Posterior cingulate gyrus (tissue), 11 donors: ENCODE measurements at regions of chr9 and their contacts with region 1.

Region 1: DNA sequence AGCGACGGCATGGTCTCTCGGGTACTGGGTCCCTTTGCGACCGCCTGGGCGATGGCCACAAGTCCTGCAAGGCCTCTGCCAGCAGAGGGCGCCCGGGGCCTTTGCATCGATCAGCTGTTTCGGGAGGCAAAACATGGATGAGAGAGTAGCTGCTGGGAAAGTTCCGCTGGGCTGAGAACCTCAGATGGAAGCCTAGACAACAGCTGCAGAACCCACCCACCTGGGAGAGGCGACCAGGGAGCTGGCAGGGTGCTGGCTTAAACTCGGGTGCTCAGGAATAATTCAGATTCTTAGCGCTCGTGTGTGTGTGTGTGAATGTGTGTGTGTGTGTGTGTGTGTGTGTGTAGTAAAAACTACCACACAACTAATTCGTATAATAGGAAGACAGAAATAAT is 50.0 kb downstream of the TRIM32 start:
- DNase-seq: peak; percentile 74 to 98 (median 89)

Region 2: GRCh38 chr9:116860509-116861120 is 123.5 kb after region 1 on chr9:
- intact Hi-C with region 1: loop called (anchors 1 kb)
- DNase-seq: peak in 9 of 10 donors; percentile 43 to 92 (median 69)